ENCODE measurements at regions of chr3 and their contacts with region 1.

Region 1: GRCh38 chr3:36700537-36701248 is 63.7 kb downstream of the DCLK3 start:
- DNase-seq: peak; percentile 71
- H3K4me3 Mint-ChIP-seq: no peak overlapping the region
- H3K27ac Mint-ChIP-seq: no peak overlapping the region
- H3K4me1 Mint-ChIP-seq: peaks cover 27% of the 10 kb centered on the region
- H3K27me3 Mint-ChIP-seq: no peaks in the 10 kb centered on the region
- CTCF ChIP-seq: peak; percentile 84

Region 2: GRCh38 chr3:35965908-35966307 is 734.8 kb before region 1 on chr3:
- CTCF ChIA-PET with region 1: interaction called, 25 read pairs
- POLR2A ChIA-PET with region 1: no interaction called
- intact Hi-C with region 1: loop called (anchors 1 kb)
- DNase-seq: peak; percentile 42
- H3K4me3 Mint-ChIP-seq: no peak overlapping the region
- H3K27ac Mint-ChIP-seq: no peak overlapping the region
- H3K4me1 Mint-ChIP-seq: no peaks in the 10 kb centered on the region
- H3K27me3 Mint-ChIP-seq: peaks cover 45% of the 10 kb centered on the region
- CTCF ChIP-seq: peak; percentile 50

Region 3: DNA sequence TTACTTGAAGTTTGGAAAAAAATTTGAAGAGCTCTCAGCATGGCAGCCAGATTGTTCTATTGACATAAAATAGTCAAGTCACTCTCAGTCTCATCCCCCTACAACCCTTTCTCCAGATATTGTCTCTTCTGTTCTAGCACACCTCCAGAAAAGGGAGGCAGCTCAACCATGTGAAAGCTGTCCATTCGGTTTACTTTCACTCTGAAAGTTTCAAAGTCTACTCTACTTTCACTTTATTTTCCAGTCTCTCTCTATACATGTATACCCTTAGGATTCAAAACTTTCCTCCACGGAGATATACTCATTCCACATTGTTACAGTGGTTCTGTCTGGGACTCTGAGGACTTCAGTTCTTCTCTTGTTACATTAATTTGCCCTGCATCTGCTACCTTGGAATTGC is 431.4 kb before region 1 on chr3:
- CTCF ChIA-PET with region 1: no interaction called
- POLR2A ChIA-PET with region 1: no interaction called
- intact Hi-C with region 1: loop called (anchors 10 kb)
- DNase-seq: no peak
- H3K4me3 Mint-ChIP-seq: no peak overlapping the region
- H3K27ac Mint-ChIP-seq: no peak overlapping the region
- H3K4me1 Mint-ChIP-seq: no peaks in the 10 kb centered on the region
- H3K27me3 Mint-ChIP-seq: no peaks in the 10 kb centered on the region
- CTCF ChIP-seq: no peak

Region 4: DNA sequence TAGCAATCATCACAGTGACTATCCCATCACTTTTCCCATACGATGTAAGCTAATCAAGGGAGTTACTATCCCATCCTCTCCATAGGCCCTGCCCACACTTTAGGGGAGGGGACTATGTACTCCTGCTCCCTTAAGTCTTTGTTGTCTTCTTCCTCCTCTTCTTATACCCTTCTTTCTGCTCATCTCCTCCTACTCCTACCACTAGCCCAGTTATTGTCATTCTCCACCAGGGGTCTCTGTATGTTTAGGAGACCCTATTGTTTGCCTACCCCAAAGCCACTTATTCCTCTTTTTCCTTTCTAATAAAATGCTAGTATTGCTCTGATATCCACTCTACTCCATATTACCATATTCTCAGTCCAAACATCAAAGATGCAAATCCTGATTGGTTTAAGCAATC is 292.5 kb before region 1 on chr3:
- CTCF ChIA-PET with region 1: interaction called, 3 read pairs
- POLR2A ChIA-PET with region 1: no interaction called
- intact Hi-C with region 1: loop called (anchors 1 kb)
- DNase-seq: no peak
- H3K4me3 Mint-ChIP-seq: no peak overlapping the region
- H3K27ac Mint-ChIP-seq: no peak overlapping the region
- H3K4me1 Mint-ChIP-seq: no peaks in the 10 kb centered on the region
- H3K27me3 Mint-ChIP-seq: no peaks in the 10 kb centered on the region
- CTCF ChIP-seq: no peak

Region 5: DNA sequence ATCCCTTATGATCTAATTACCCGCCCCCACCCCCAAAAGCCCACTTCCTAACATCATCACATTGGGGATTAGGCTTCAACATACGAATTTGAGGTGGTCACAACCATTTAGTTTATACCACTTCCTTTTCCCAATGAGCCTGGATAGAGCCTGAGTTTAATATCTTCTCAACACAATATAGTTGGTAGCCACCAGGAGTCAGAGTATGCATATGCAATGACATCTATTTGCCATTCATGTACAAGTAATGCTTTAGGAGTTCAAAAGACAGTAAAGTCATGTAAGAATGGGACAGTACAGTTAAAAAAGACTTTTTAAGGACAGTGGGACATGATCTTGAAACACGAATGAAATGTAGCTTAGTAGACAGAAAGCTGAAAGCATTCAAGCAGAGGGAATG is 108.7 kb before region 1 on chr3:
- CTCF ChIA-PET with region 1: interaction called, 26 read pairs
- POLR2A ChIA-PET with region 1: no interaction called
- intact Hi-C with region 1: loop called (anchors 1 kb)
- DNase-seq: peak; percentile 27
- H3K4me3 Mint-ChIP-seq: no peak overlapping the region
- H3K27ac Mint-ChIP-seq: no peak overlapping the region
- H3K4me1 Mint-ChIP-seq: peaks cover 2% of the 10 kb centered on the region
- H3K27me3 Mint-ChIP-seq: no peaks in the 10 kb centered on the region
- CTCF ChIP-seq: peak; percentile 14

Region 6: DNA sequence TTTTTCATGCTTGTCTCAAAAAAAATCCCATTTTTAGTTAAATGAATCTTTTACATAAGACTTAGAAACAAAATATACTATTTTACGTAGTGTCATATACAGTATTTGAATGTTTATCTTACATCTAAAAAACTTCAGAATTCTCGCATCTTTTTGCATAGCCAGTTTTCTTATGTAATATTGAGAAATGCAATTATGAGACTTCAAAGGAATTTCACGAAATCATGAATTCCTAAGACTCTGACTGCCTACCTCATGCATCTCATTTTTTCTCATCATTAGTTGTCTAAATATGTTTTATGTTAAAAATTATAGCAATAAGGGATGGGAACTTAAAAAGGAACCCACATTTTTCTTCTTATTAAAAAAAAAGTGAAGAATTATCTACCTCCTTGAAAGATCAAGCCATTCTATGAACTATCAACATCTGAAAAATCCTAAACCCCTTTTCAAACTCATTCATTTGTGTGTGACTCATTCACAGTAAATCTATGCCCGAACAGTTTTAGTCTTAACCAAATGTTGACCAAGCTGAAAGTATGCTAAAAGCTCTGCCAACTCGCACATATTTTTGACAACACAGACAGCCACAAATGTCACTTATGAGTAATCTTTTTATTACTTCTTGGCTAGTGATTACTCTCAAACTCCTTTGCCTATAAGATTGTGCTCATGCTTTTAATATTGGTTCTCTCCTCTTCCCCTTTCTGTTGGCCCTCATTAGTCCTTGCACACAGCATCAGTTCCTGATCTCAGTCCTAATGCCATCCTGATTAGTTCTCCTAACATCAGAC is 52.3 kb before region 1 on chr3:
- CTCF ChIA-PET with region 1: no interaction called
- POLR2A ChIA-PET with region 1: interaction called, 3 read pairs
- intact Hi-C with region 1: loop called (anchors 5 kb)
- DNase-seq: peak; percentile 81
- H3K4me3 Mint-ChIP-seq: no peak overlapping the region
- H3K27ac Mint-ChIP-seq: peak overlapping the region; percentile 57
- H3K4me1 Mint-ChIP-seq: peaks cover 30% of the 10 kb centered on the region
- H3K27me3 Mint-ChIP-seq: no peaks in the 10 kb centered on the region
- CTCF ChIP-seq: no peak

Region 7: DNA sequence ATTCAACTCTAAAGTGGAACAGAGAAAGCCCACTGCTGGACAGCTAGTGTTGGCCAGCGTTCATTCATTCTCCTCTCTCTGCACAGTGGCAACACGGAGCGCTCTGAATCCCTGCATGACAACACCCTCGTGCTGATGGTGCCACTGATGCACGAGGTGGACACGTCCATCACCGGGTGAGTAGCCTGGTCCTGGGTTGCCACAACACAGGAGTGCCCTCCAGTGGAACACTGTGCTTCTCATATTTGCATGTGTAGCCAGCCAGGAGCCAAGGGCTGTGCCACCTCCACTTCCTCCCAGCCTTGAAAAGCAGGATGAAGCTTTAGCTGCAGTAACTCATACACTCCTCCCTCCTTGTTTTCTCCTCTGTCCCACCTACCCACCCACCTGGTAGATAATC is 1041.0 kb after region 1 on chr3:
- CTCF ChIA-PET with region 1: no interaction called
- POLR2A ChIA-PET with region 1: no interaction called
- intact Hi-C with region 1: no loop called
- DNase-seq: peak; percentile 54
- H3K4me3 Mint-ChIP-seq: no peak overlapping the region
- H3K27ac Mint-ChIP-seq: no peak overlapping the region
- H3K4me1 Mint-ChIP-seq: no peaks in the 10 kb centered on the region
- H3K27me3 Mint-ChIP-seq: peaks cover 100% of the 10 kb centered on the region
- CTCF ChIP-seq: peak; percentile 35